Activated naive CD4-positive, alpha-beta T cell treated with anti-CD3 and anti-CD28 coated beads, Interleukin-2, amount 10 ng/mL, durations not matched to agents 7 days and 5 days (primary cell): ENCODE measurements at regions of chr2 and their contacts with region 1.

Region 1: DNA sequence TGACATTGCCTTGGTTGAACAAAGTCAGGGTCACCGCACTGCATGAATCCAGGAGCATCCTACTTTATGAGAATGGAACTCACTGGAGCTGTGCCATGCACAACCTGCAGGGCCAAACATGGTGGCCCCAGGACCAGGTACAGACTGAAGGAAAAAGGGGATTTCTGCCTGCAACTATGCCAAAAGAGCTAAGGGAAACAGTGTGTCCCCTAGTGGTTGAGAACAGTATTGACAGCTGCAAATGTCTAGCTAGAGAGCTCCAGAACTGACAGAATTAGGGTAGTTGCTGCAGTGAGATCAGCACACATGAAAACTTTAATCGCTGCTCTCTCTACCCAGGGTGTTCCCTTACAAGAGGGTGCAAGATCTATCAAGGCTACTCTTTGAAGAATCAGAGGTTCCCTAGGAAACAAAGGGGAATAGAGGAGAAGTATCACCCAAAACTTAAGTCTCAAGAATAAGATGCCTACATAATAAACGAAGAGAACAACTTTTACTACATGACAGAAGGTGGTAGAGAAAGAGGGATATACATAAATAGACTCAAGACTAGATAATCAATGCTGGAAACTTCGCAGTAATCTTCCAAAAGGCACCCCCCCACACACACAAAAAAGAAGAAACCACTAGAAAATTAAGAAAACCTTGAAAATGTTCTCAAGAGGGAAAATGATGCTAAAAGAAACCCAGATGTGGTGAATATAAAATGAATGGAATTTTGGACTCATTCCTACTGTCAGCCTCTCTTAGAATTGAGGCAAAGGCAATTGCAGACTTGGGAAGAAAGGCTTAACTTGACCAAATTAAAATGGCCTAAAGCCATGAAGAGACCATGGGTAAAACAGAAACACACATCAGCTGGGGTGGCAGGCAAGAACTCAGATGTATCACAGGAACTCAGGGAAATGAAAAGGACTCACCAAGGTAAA is 43.6 kb upstream of the IHH start:
- DNase-seq: no peak
- H3K4me3 Mint-ChIP-seq: no peak overlapping the region
- H3K27ac Mint-ChIP-seq: no peak overlapping the region
- H3K4me1 Mint-ChIP-seq: peaks cover 3% of the 10 kb centered on the region
- H3K27me3 Mint-ChIP-seq: no peaks in the 10 kb centered on the region

Region 2: GRCh38 chr2:218701806-218702205 is 402.6 kb before region 1 on chr2:
- CTCF ChIA-PET with region 1: no interaction called
- DNase-seq: no peak
- H3K4me3 Mint-ChIP-seq: no peak overlapping the region
- H3K27ac Mint-ChIP-seq: no peak overlapping the region
- H3K4me1 Mint-ChIP-seq: no peaks in the 10 kb centered on the region
- H3K27me3 Mint-ChIP-seq: peaks cover 6% of the 10 kb centered on the region

Region 3: GRCh38 chr2:219029829-219030165 is 74.6 kb before region 1 on chr2:
- CTCF ChIA-PET with region 1: interaction called, 14 read pairs
- DNase-seq: peak; percentile 83
- H3K4me3 Mint-ChIP-seq: no peak overlapping the region
- H3K27ac Mint-ChIP-seq: no peak overlapping the region
- H3K4me1 Mint-ChIP-seq: no peaks in the 10 kb centered on the region
- H3K27me3 Mint-ChIP-seq: peaks cover 40% of the 10 kb centered on the region

Region 4: GRCh38 chr2:219073413-219074129 is 30.8 kb before region 1 on chr2:
- CTCF ChIA-PET with region 1: interaction called, 46 read pairs
- DNase-seq: no peak
- H3K4me3 Mint-ChIP-seq: no peak overlapping the region
- H3K27ac Mint-ChIP-seq: no peak overlapping the region
- H3K4me1 Mint-ChIP-seq: no peaks in the 10 kb centered on the region
- H3K27me3 Mint-ChIP-seq: no peaks in the 10 kb centered on the region

Region 5: DNA sequence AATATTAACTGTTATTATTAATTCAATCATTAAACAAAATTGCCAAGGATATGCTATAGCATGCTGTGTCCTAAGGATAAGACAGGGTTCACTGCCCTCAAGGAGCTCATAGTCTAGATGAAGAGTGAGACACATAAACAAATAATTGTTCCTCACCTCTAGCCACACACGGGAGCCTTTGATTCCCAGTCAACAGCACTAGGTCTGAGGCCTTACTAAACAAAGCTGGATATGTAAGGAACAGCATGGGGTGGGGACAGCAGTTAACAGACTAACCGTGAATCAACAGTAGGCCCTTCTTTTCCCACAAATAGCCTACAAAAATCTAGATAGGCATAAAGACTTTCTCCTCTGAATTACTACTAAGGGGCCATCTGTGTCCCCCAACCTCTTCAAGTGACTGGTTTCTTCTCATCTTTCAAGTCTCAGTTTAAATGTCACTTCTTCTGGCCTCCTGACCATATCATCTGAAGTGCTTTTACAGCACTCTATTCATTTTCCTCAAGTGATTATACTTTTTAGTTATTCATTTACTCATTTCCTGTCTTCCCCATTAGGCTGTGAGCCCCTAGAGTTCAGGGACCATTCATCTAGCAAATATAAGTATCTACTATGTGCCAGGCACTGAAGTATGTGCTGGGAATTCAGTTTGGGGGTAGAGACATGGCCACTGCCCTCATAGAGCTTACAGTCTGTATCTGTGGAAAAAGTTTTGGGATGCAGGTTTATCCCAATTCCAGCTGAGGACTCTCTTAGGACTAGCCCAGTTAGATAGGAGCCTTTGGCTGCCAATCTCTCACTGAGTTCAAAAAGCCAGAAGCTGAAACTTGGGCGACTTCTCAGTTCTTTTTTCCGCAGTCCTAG is 13.7 kb before region 1 on chr2:
- CTCF ChIA-PET with region 1: interaction called, 11 read pairs
- DNase-seq: no peak
- H3K4me3 Mint-ChIP-seq: no peak overlapping the region
- H3K27ac Mint-ChIP-seq: no peak overlapping the region
- H3K4me1 Mint-ChIP-seq: no peaks in the 10 kb centered on the region
- H3K27me3 Mint-ChIP-seq: no peaks in the 10 kb centered on the region

Region 6: GRCh38 chr2:219218732-219219701 is 114.6 kb after region 1 on chr2 and contains the start of gene ABCB6:
- CTCF ChIA-PET with region 1: no interaction called
- DNase-seq: peak; percentile 94
- H3K4me3 Mint-ChIP-seq: peak within 1 kb of the TSS; percentile 81
- H3K27ac Mint-ChIP-seq: peak within 1 kb of the TSS; percentile 89
- H3K4me1 Mint-ChIP-seq: peaks cover 31% of the 10 kb centered on the region
- H3K27me3 Mint-ChIP-seq: no peaks in the 10 kb centered on the region

Region 7: GRCh38 chr2:219253753-219254590 is 149.6 kb after region 1 on chr2 and contains the start of gene TUBA4A:
- CTCF ChIA-PET with region 1: no interaction called
- DNase-seq: peak; percentile 93
- H3K4me3 Mint-ChIP-seq: peak within 1 kb of the TSS; percentile 92
- H3K27ac Mint-ChIP-seq: peak within 1 kb of the TSS; percentile 95
- H3K4me1 Mint-ChIP-seq: peaks cover 53% of the 10 kb centered on the region
- H3K27me3 Mint-ChIP-seq: peaks cover 8% of the 10 kb centered on the region